ENCODE measurements at regions of chr2 and their contacts with region 1.

Region 1: GRCh38 chr2:54589340-54590215 is 133.5 kb downstream of the SPTBN1 start:
- DNase-seq: peak; percentile 70
- ATAC-seq: peak; percentile 79
- H3K4me3 ChIP-seq: no peak overlapping the region
- H3K27ac ChIP-seq: no peak overlapping the region
- H3K4me1 ChIP-seq: peaks cover 11% of the 10 kb centered on the region
- H3K27me3 ChIP-seq: no peaks in the 10 kb centered on the region
- CTCF ChIP-seq: no peak
- POLR2A ChIP-seq: no peak
- RAD21 ChIP-seq: no peak

Region 2: DNA sequence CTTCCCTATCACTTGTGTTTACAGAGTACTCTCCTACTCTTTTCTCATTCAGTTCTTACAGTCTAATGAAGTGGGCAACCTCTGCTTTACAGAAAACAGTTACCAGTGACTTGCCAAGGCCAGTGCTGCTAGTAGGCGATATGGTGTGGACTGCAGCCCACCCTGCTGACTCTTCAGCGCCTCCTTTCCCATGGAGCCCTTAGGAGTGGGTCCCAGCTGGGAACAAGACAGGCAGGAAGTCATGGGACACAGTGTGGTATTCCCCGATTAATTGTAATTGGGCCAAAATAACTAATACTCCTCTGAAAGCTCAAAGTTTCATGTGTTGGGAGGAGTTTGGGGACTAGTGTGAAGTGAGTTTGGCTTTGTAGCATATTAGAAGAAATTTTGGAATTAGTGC is 13.8 kb after region 1 on chr2:
- CTCF ChIA-PET with region 1: interaction called, 4 read pairs
- POLR2A ChIA-PET with region 1: no interaction called
- dilution Hi-C with region 1: no loop called
- in situ Hi-C with region 1: no loop called
- intact Hi-C with region 1: loop called (anchors 2 kb)
- DNase-seq: peak; percentile 22
- ATAC-seq: no peak; the same call in 1 of the 2 replicates
- H3K4me3 ChIP-seq: no peak overlapping the region
- H3K27ac ChIP-seq: peak overlapping the region; percentile 39; the same call in 1 of the 2 replicates
- H3K4me1 ChIP-seq: peaks cover 27% of the 10 kb centered on the region
- H3K27me3 ChIP-seq: no peaks in the 10 kb centered on the region
- CTCF ChIP-seq: no peak
- POLR2A ChIP-seq: no peak
- RAD21 ChIP-seq: no peak

Region 3: DNA sequence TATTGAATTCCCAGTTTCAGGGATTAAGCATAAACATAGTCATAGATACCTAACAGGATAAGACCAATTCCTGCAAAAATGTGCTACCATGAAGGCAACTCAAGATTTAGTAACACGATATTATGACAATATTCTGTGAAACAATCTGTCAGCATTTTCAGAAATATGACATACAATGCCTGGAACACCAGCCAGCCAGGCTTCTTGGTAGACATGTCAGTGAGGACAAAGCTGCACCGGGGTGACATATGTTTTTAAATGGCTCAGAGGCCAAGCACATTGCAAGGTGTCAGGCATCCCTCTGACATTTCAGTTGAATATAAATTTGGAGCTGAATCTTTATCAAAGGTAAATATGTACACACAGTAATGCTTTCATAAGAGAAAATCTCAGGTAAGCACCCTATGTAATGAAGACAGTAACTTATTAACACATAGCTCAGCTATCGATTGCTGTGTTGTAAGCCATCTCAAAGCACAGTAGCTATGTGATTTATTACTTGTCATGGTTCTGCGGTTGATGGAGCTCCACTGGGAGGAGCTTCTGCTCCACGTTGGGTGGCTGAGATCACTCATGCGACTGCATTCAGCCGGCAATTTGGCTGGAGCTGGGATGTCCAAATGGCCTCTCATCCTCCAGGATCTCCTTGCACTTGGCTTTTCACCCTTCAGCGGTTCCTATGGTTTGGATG is 102.0 kb after region 1 on chr2:
- CTCF ChIA-PET with region 1: no interaction called
- POLR2A ChIA-PET with region 1: no interaction called
- dilution Hi-C with region 1: no loop called
- in situ Hi-C with region 1: no loop called
- intact Hi-C with region 1: no loop called
- DNase-seq: no peak
- ATAC-seq: no peak
- H3K4me3 ChIP-seq: no peak overlapping the region
- H3K27ac ChIP-seq: no peak overlapping the region
- H3K4me1 ChIP-seq: no peaks in the 10 kb centered on the region
- H3K27me3 ChIP-seq: 0 out of 2 replicates have a peak, but pooled peaks cover 1% of the 10 kb centered on the region
- CTCF ChIP-seq: no peak
- POLR2A ChIP-seq: no peak
- RAD21 ChIP-seq: no peak

Region 4: DNA sequence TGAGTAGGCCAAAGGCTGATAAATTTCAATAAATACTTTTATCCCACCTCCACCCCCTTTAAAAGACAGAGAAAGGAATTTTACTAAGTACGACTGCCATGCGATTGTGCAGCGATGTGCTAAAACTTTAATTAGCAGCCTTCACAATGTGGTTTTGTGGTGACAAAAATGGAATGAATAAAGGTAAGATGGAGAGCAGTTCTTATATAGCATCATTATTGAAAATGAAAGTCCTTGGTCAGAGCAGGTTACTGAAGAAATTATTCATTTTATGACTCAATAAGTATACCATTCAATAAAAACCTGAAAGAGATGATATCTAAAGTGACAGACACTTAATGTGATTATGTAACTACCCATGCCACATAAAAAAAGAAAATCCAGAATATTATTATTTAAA is 712.7 kb after region 1 on chr2:
- CTCF ChIA-PET with region 1: no interaction called
- POLR2A ChIA-PET with region 1: no interaction called
- dilution Hi-C with region 1: no loop called
- in situ Hi-C with region 1: no loop called
- intact Hi-C with region 1: no loop called
- DNase-seq: no peak
- ATAC-seq: no peak
- H3K4me3 ChIP-seq: no peak overlapping the region
- H3K27ac ChIP-seq: no peak overlapping the region
- H3K4me1 ChIP-seq: no peaks in the 10 kb centered on the region
- H3K27me3 ChIP-seq: no peaks in the 10 kb centered on the region
- CTCF ChIP-seq: no peak
- POLR2A ChIP-seq: no peak
- RAD21 ChIP-seq: no peak